Activated CD8-positive, alpha-beta T cell treated with anti-CD3 and anti-CD28 coated beads, Interleukin-2, amount 10 ng/mL, durations not matched to agents 7 days and 5 days (primary cell): ENCODE measurements at regions of chr10 and their contacts with region 1.

Region 1: GRCh38 chr10:80487791-80488538 is 33.9 kb downstream of the TSPAN14 start:
- DNase-seq: peak; percentile 88
- ATAC-seq: peak; percentile 74
- H3K4me3 Mint-ChIP-seq: peak overlapping the region; percentile 74
- H3K27ac Mint-ChIP-seq: peak overlapping the region; percentile 94
- H3K4me1 Mint-ChIP-seq: peaks cover 97% of the 10 kb centered on the region
- H3K27me3 Mint-ChIP-seq: no peaks in the 10 kb centered on the region

Region 2: GRCh38 chr10:80459047-80459931 is 28.7 kb before region 1 on chr10:
- CTCF ChIA-PET with region 1: interaction called, 30 read pairs
- POLR2A ChIA-PET with region 1: interaction called, 67 read pairs
- DNase-seq: peak; percentile 90
- ATAC-seq: peak; percentile 63
- H3K4me3 Mint-ChIP-seq: peak overlapping the region; percentile 99
- H3K27ac Mint-ChIP-seq: peak overlapping the region; percentile 90
- H3K4me1 Mint-ChIP-seq: peaks cover 82% of the 10 kb centered on the region
- H3K27me3 Mint-ChIP-seq: no peaks in the 10 kb centered on the region

Region 3: DNA sequence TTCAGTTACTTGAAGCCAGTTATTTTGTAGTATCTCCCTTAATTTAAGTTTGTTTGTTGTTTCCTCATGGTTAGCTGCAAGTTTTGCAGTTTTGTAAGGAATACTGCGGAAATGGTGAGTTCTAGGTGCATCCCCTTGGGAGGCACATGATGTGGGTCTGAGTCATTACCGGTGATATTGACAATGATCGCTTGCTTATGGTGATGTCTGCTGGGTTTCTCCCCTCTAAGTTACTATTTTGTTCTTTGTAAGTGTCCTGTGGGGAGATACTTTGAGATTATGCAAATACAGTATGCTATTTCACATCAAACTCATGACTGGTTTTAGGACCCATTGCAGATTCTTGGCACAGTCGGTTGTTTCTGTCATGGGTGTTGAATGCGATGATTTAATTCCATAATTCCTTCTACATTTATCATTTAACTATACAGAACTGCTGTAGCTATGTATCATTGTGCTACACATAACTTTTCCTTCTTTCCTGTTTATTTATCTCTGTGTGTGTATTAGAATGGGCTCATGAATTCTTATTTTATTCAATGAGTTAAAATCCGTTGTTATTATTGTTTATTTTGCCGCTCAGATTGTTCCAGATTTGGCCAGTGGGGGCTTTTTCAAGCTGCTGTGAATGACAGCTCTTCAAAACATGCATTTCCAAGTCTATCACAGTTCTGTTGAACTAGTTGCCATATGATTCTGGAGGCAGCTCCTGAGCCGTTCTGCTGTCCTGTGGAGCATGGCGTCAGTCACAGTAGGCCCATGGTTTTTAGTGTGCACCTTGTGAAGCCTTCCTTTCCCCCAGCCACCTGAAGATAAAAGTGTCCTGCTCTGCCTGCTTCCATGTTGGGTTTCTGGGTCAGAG is 15.5 kb before region 1 on chr10:
- CTCF ChIA-PET with region 1: interaction called, 40 read pairs
- POLR2A ChIA-PET with region 1: interaction called, 67 read pairs
- DNase-seq: no peak
- ATAC-seq: peak; percentile 40
- H3K4me3 Mint-ChIP-seq: peak overlapping the region; percentile 43
- H3K27ac Mint-ChIP-seq: peak overlapping the region; percentile 77
- H3K4me1 Mint-ChIP-seq: peaks cover 88% of the 10 kb centered on the region
- H3K27me3 Mint-ChIP-seq: no peaks in the 10 kb centered on the region

Region 4: GRCh38 chr10:80477813-80478212 is 10.2 kb before region 1 on chr10:
- CTCF ChIA-PET with region 1: interaction called, 40 read pairs
- POLR2A ChIA-PET with region 1: interaction called, 18 read pairs
- DNase-seq: no peak
- ATAC-seq: no peak
- H3K4me3 Mint-ChIP-seq: no peak overlapping the region
- H3K27ac Mint-ChIP-seq: no peak overlapping the region
- H3K4me1 Mint-ChIP-seq: peaks cover 78% of the 10 kb centered on the region
- H3K27me3 Mint-ChIP-seq: no peaks in the 10 kb centered on the region

Region 5: DNA sequence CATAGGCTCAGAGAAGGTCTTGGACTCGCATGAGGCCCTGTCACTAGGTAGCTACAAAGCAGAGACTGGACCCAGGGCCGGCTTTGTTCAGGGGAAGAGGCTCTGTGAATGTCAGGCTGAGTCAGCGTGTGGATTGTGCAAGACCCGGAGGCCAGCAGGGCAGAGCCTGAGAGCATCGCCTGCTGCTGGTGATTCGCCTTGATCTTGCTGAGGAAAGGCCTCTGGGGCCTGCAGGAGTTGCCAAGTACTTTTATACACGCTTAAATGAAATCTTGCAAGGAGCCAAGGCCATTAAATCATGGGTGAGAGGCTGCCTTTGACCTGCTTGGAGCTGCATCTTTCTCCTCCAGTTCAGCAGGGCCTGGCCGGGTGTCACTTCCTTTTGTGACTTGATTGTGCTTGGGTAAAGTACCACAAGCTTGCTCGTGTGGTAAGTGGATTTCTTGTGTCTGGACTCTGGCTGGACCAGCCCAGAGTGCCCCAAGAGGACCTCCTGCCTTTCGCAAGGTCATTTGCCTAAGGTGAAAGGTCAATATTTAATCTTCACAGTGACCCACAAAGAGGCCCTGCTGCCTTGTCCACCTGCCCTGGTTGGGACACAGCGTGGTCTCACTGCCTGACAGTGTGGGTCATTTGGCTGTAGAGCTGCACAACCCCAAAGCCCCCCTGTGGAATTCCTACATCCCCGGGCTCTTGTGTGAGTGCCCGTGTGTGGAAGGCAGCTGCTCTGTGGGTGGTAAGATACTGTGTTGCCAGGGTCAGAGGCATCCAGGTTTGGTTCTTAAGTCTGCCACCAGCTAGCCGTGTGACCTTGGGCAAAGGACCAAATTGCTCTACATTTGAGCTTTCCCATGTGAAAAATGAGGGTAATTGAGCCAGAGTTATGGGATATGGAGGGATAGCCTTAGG is 11.1 kb after region 1 on chr10:
- CTCF ChIA-PET with region 1: interaction called, 46 read pairs
- POLR2A ChIA-PET with region 1: interaction called, 52 read pairs
- DNase-seq: peak; percentile 71
- ATAC-seq: peak; percentile 70
- H3K4me3 Mint-ChIP-seq: peak overlapping the region; percentile 64
- H3K27ac Mint-ChIP-seq: peak overlapping the region; percentile 90
- H3K4me1 Mint-ChIP-seq: peaks cover 97% of the 10 kb centered on the region
- H3K27me3 Mint-ChIP-seq: no peaks in the 10 kb centered on the region

Region 6: DNA sequence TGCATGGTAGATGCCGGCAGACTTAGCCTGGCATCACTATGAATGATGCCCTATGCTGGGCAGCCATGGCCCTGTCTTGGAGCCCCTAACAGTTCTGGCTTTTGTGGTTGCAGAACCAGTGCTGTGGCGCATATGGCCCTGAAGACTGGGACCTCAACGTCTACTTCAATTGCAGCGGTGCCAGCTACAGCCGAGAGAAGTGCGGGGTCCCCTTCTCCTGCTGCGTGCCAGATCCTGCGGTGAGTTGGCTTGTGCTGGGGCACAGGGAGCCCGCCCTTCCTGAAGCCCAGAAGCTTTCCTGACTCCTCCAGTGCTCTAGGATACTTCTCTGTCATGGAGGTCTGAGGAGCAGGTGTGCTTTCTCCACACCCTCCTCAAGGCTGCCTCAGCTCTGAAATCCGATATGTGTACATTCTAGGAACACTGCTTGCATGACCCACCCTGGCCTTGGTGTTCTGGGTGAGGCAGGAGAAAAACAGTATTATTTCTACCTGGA is 24.1 kb after region 1 on chr10:
- CTCF ChIA-PET with region 1: interaction called, 10 read pairs
- POLR2A ChIA-PET with region 1: no interaction called
- DNase-seq: no peak
- ATAC-seq: no peak
- H3K4me3 Mint-ChIP-seq: peak overlapping the region; percentile 40
- H3K27ac Mint-ChIP-seq: peak overlapping the region; percentile 91
- H3K4me1 Mint-ChIP-seq: peaks cover 49% of the 10 kb centered on the region
- H3K27me3 Mint-ChIP-seq: no peaks in the 10 kb centered on the region

Region 7: DNA sequence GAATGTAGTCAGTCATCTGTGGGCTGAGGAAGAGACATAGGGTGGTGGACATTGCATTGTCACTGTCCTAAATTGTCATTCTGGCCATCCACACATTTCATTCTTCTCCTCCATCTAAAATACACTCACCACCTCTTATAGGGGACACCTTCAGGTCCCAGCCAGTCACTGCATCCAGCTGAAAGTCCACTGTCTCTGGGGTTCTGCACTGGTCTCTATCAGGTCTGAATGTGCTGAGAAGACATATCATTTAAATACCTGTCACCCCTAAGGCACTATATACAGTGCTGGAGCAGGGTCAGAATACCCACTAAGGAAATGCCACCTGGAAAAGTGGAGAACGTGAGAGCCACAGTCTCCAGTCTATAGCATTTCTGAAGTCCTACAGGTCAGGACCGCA is 79.3 kb after region 1 on chr10:
- CTCF ChIA-PET with region 1: no interaction called
- POLR2A ChIA-PET with region 1: no interaction called
- DNase-seq: peak; percentile 17
- ATAC-seq: no peak
- H3K4me3 Mint-ChIP-seq: no peak overlapping the region
- H3K27ac Mint-ChIP-seq: no peak overlapping the region
- H3K4me1 Mint-ChIP-seq: no peaks in the 10 kb centered on the region
- H3K27me3 Mint-ChIP-seq: peaks cover 16% of the 10 kb centered on the region

Region 8: DNA sequence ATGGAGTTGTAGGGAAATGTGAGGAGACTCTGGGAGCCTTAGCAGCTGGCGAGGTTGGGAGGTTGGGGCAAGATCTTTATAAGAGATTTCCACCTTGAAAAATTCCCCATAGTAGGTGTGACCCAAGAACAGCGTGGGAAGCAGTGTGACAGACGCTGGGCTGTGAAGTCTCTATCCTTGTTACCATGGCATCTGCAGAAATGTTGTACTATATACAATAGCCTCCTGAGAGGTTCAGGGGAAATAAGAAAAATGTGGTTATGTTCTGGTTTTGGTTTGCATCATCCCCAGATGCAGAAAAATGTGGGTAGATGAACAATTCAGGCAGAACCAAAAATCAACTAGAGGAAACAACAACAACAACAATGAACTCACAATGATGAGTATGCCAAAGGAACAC is 548.3 kb after region 1 on chr10:
- CTCF ChIA-PET with region 1: no interaction called
- POLR2A ChIA-PET with region 1: no interaction called
- DNase-seq: no peak
- ATAC-seq: no peak
- H3K4me3 Mint-ChIP-seq: no peak overlapping the region
- H3K27ac Mint-ChIP-seq: no peak overlapping the region
- H3K4me1 Mint-ChIP-seq: no peaks in the 10 kb centered on the region
- H3K27me3 Mint-ChIP-seq: no peaks in the 10 kb centered on the region